Keratinocyte (primary cell): ENCODE measurements at regions of chr15 and their contacts with region 1.

Region 1: GRCh38 chr15:38354315-38354929 is 99.5 kb upstream of the FAM98B start:
- DNase-seq: peak; percentile 15
- H3K4me3 ChIP-seq: no peak overlapping the region
- H3K27ac ChIP-seq: no peak overlapping the region
- H3K4me1 ChIP-seq: no peaks in the 10 kb centered on the region
- H3K27me3 ChIP-seq: no peaks in the 10 kb centered on the region
- CTCF ChIP-seq: peak; percentile 68 to 74 (median 70)

Region 2: GRCh38 chr15:38002883-38003477 is 351.4 kb before region 1 on chr15:
- dilution Hi-C with region 1: loop called (anchors 25 kb)
- DNase-seq: peak; percentile 23
- H3K4me3 ChIP-seq: no peak overlapping the region
- H3K27ac ChIP-seq: no peak overlapping the region
- H3K4me1 ChIP-seq: no peaks in the 10 kb centered on the region
- H3K27me3 ChIP-seq: no peaks in the 10 kb centered on the region
- CTCF ChIP-seq: peak; percentile 70 to 95 (median 80)